H1 (cell line): ENCODE measurements at regions of chr4 and their contacts with region 1.

Region 1: DNA sequence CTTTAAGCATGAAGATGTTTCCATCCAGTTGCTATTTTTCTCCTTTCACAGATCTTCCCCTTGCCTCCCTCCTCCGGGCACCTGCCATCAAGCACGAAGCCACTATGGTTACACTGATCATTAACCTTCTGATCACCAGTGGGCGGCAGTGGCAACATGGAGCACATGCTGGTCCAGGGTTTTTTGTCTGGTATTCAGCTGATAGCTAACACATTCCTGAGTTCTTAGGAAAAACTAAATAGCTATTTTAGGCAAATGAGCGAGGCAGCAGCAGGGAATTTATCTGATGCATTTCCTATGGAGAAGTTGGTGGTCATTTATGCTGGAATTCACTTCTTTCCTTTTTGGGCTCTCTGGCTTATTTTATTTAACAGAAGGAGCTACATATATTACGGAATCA is 22.9 kb downstream of the SHISA3 start:
- DNase-seq: no peak
- H3K4me3 ChIP-seq: no peak overlapping the region
- H3K27ac ChIP-seq: no peak overlapping the region
- H3K4me1 ChIP-seq: peaks cover 0 to 3% (median 0%) of the 10 kb centered on the region in 4 experiments; a peak in 3 of 7 replicates
- H3K27me3 ChIP-seq: no peaks in the 10 kb centered on the region
- CTCF ChIP-seq: peak in 1 of 3 experiments; percentile 4; a peak in 1 of 4 replicates
- EP300 ChIP-seq: no peak
- POLR2A ChIP-seq: no peak
- RAD21 ChIP-seq: peak in 1 of 2 experiments; percentile 26; a peak in 1 of 4 replicates

Region 2: DNA sequence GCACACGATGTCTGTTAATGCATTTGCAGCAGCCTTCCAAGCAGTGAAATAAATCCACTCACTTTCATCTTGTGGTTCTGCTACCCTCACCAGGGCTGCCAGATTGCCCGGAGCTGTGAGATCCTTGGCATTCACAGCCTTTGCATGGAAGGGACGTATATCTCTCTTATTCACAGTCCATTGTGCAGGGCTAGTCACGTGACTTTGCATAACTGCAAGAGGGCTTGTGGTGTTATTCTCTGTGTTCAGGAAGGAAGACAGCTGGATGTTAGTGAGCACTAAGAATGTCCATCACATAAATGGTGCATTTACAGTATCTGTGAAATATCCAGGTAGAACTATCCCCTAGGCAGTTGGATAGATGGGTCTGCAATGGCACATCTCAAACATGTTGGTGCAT is 171.2 kb before region 1 on chr4:
- CTCF ChIA-PET with region 1: no interaction called
- POLR2A ChIA-PET with region 1: no interaction called
- DNase-seq: no peak
- H3K4me3 ChIP-seq: no peak overlapping the region
- H3K27ac ChIP-seq: no peak overlapping the region
- H3K4me1 ChIP-seq: no peaks in the 10 kb centered on the region
- H3K27me3 ChIP-seq: peaks cover 0 to 2% (median 0%) of the 10 kb centered on the region in 4 experiments; a peak in 1 of 7 replicates
- CTCF ChIP-seq: no peak
- EP300 ChIP-seq: no peak
- POLR2A ChIP-seq: no peak
- RAD21 ChIP-seq: no peak

Region 3: DNA sequence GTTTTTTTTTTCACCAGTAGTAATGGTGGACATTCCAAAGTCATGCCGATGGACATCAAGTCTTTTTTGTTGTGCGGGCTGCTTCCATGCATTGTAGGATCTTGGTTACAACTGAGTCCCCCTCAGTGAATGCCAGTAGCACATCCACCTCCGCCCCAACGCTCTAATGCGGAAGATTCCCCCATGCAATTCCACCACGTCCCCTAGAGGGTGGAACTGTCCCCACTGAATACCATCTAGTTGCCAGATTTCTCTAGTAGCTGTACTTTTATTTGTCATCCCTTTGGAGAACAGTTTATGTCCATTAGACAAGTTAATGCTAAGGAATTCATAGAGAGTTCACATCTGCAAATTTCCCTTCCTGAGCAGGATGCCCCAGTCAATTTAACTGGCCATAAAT is 16.1 kb before region 1 on chr4:
- CTCF ChIA-PET with region 1: interaction called, 12 read pairs
- POLR2A ChIA-PET with region 1: no interaction called
- DNase-seq: no peak
- H3K4me3 ChIP-seq: no peak overlapping the region
- H3K27ac ChIP-seq: no peak overlapping the region
- H3K4me1 ChIP-seq: peaks cover 0 to 6% (median 4%) of the 10 kb centered on the region in 4 experiments; a peak in 5 of 7 replicates
- H3K27me3 ChIP-seq: peaks cover 3 to 26% (median 23%) of the 10 kb centered on the region in 4 experiments
- CTCF ChIP-seq: peak; percentile 59 to 70 (median 66)
- EP300 ChIP-seq: no peak
- POLR2A ChIP-seq: no peak
- RAD21 ChIP-seq: peak; percentile 63 to 73